ENCODE measurements at regions of chr3 and their contacts with region 1.

Region 1: DNA sequence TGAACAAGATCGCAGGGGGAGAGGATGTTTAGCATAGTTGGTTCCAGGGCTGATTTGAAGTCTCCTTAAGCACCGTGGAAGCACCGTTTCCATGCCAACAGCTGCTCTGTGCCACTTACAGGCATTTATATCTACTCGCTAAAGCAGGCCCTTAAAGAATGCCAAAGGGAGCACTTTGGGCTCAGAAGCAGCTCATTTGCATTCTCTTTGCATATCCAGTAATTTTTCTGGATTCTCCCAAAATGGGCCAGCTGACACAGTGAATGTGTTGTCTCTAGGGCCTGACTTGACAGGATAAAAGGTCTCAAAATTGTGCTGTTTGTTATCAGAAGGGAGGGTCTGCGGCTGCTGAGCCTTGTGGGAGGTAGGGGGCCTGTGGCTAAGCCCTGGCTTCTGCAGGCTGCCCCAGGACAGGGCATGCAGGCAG is 138.6 kb downstream of the FBLN2 start:
- DNase-seq: no peak
- H3K27ac ChIP-seq: no peak overlapping the region
- CTCF ChIP-seq: no peak

Region 2: DNA sequence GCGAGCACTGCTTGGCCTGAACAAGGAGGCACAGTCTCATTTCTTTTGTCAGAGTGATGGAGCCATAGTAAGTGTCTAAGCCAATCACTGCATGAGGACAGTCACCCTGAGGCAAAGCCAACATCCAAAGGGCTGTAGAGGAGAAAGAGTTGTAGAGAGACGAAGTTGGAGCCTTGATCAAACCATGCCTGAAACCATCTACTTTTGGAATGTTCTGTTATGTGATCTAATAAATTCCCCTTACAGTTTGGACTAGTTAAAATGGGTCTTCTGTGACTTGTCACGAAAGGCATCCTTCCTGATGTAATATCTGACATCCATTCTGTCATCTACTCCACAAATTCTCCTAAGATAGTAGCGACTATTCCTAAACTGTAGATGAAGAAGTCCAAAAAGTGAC is 10.3 kb before region 1 on chr3:
- CTCF ChIA-PET with region 1: interaction called, 11 read pairs
- POLR2A ChIA-PET with region 1: no interaction called
- DNase-seq: no peak
- H3K27ac ChIP-seq: no peak overlapping the region
- CTCF ChIP-seq: no peak